WTC11 (cell line): ENCODE measurements at regions of chrX and their contacts with region 1.

Region 1: DNA sequence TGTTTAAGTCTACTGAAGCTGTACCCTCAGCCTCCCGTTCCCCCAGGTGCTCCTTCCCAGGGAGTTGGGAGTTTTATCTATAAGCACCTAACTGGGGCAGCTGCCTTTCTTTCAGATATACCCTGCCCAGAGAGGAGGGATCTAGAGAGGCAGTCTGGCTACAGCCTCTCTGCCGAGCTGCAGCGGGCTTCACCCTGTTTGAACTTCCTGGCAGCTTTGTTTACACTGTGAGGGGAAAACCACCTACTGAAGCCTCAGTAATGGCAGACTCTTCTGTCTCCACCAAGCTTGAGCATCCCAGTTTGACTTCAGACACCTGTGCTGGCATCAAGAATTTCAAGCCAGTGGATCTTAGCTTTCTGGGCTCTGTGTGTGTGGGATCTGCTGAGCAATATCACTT is 122.5 kb downstream of the MAGEE1 start:
- DNase-seq: no peak
- ATAC-seq: no peak
- H3K4me3 Mint-ChIP-seq: no peak overlapping the region
- H3K27ac Mint-ChIP-seq: no peak overlapping the region
- H3K4me1 Mint-ChIP-seq: no peaks in the 10 kb centered on the region
- H3K27me3 Mint-ChIP-seq: no peaks in the 10 kb centered on the region; the same call in none of the 2 replicates
- CTCF ChIP-seq: no peak

Region 2: GRCh38 chrX:76509775-76510174 is 40.2 kb before region 1 on chrX:
- CTCF ChIA-PET with region 1: no interaction called
- POLR2A ChIA-PET with region 1: no interaction called
- DNase-seq: no peak
- ATAC-seq: no peak
- H3K4me3 Mint-ChIP-seq: no peak overlapping the region
- H3K27ac Mint-ChIP-seq: no peak overlapping the region
- H3K4me1 Mint-ChIP-seq: no peaks in the 10 kb centered on the region
- H3K27me3 Mint-ChIP-seq: no peaks in the 10 kb centered on the region
- CTCF ChIP-seq: no peak

Region 3: DNA sequence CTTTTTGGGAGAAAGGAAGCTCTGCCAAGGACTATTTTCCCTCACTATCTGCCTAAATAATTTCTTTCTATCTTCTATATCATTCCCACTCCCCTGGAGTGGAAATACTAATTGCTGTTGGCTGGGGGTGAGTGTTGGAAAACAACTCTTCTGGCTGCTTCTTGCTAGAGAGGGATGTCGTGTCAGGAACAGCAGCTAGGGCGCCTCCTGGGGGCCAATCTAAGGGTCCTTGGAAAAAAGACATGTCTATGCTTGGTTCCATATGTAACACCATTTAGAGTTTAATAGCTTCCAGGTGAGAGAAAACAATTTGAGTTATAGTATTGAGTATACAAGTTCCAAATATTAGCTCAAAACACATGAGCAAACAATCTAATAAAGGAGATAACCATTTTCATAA is 11.2 kb before region 1 on chrX:
- CTCF ChIA-PET with region 1: interaction called, 11 read pairs
- POLR2A ChIA-PET with region 1: no interaction called
- DNase-seq: peak; percentile 35
- ATAC-seq: no peak
- H3K4me3 Mint-ChIP-seq: no peak overlapping the region
- H3K27ac Mint-ChIP-seq: no peak overlapping the region
- H3K4me1 Mint-ChIP-seq: peaks cover 4% of the 10 kb centered on the region; the same call in 1 of the 2 replicates
- H3K27me3 Mint-ChIP-seq: no peaks in the 10 kb centered on the region; the same call in 1 of the 2 replicates
- CTCF ChIP-seq: no peak